Motor neuron (in vitro differentiated cells): ENCODE measurements at regions of chr1 and their contacts with region 1.

Region 1: DNA sequence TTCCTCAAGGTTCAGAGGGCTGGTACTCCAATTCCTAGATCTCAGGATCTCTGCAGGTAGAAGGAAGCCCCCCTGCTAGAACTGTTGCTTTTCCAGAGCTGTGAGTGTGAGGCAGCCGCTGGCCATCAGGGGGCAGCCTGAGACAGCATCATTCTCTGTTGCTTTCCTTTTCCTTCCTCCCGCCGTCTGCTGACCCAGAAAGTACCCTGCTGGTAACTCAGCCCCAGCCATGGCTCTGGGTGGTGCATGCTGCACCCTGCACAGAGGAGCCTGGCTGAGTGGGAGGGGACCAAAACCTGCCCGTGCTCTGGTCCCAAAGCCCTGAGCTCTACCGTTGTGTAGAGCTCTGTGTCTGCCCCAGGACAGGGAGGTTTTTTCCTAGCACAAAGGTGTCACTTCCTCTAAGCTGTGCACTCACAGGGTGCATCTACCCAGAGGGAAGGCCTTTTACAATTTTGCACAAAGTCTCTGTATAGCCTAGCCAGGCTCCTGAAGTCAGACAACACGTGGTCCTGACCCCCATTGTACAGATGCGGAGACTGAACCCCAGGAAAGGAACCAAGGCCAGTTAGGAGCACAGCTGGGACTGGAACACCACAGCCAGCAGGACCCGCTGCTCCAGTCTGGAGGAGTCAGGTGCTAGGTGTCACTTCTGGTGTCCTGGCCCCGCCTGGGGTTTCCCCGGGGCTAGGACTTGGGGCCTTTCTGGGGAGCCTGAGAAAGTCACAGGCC is 5.6 kb upstream of the FAM131C start:
- ATAC-seq: peak; percentile 52 to 82 (median 62)
- H3K4me3 ChIP-seq: no peak overlapping the region
- H3K27ac ChIP-seq: no peak overlapping the region
- H3K4me1 ChIP-seq: peaks cover 20 to 24% of the 10 kb centered on the region in 2 donors

Region 2: DNA sequence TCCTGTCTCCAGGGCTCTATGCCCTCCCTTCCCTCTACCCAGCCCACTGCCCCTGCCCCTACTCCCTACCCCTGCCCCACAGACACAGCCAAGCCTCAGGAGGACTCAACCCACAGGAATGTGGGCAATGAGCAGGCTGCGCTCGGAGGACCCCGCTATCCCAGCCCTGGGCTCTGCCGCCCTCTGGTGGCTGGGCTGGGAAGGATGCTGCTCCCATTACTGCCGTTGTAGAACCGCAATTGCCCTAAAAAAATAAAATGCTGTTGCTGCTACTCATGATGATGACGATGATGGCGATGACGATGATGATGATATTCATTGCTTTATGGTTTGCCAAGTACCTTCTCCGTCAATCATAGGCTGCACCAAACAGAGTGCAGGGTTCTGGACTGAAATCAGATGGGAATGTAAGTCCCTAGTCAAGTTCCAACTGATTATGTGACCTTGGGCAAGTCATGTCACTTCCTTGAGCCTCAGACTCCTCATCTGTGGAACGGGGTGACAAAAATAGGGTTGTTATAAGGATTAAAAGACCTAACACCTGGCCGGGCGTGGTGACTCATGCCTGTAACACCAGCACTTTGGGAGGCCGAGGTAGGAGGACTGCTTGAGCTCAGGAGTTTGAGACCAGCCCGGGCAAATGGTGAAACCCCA is 108.8 kb after region 1 on chr1:
- in situ Hi-C with region 1: loop called (anchors 5 to 25 kb)
- ATAC-seq: peak; percentile 48 to 89 (median 76)
- H3K4me3 ChIP-seq: no peak overlapping the region
- H3K27ac ChIP-seq: no peak overlapping the region
- H3K4me1 ChIP-seq: peaks cover 0 to 4% of the 10 kb centered on the region in 2 donors

Region 3: GRCh38 chr1:16206547-16207317 is 127.6 kb after region 1 on chr1:
- in situ Hi-C with region 1: no loop called
- ATAC-seq: peak; percentile 91 to 96 (median 93)
- H3K4me3 ChIP-seq: peak overlapping the region; percentile 35 to 50 (median 41)
- H3K27ac ChIP-seq: peak overlapping the region; percentile 84 to 86
- H3K4me1 ChIP-seq: peaks cover 9 to 22% of the 10 kb centered on the region in 2 donors

Region 4: GRCh38 chr1:16243936-16244649 is 165.0 kb after region 1 on chr1:
- in situ Hi-C with region 1: loop called in 1 of 9 experiments (anchors 10 kb)
- ATAC-seq: peak; percentile 21 to 78 (median 46)
- H3K4me3 ChIP-seq: no peak overlapping the region
- H3K27ac ChIP-seq: no peak overlapping the region
- H3K4me1 ChIP-seq: peaks cover 16 to 18% of the 10 kb centered on the region in 2 donors

Region 5: DNA sequence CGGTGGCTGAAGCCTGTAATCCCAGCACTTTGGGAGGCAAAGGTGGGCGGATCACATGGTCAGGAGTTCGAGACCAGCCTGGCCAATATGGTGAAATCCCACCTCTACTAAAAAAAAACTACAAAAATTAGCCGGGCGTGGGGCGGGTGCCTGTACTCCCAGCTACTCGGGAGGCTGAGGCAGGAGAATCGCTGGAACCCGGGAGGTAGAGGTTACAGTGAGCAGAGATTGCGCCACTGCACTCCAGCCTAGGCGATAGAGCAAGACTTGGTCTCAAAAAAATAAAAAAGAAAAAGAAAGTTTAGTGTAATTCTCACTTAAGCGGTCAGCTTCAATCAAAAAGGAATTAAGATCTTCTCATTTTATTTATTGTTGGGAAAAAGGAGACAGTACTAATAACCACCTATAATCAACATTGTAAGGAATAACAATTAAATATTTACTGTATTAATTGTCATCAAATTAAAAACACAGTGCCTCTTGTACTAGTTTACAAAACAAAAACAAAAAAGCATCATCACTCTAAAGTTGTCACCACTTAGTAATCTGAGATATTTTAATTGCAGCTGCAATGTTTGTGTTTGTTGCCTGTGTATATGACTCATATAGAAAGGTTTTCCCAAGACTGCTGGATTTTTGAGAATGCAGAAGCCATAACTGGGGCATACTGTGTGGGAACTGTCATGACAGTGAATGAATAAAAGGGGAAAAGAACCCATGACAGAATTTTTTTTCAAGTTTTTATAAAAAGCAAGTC is 269.5 kb after region 1 on chr1:
- in situ Hi-C with region 1: loop called in 1 of 9 experiments (anchors 25 kb)
- ATAC-seq: peak in 3 of 8 experiments; percentile 8 to 26 (median 13)
- H3K4me3 ChIP-seq: no peak overlapping the region
- H3K27ac ChIP-seq: no peak overlapping the region
- H3K4me1 ChIP-seq: peaks cover 21% of the 10 kb centered on the region in 2 donors